ENCODE measurements at regions of chr4 and their contacts with region 1.

Region 1: GRCh38 chr4:147714575-147715401 is 17.1 kb upstream of the ARHGAP10 start:
- DNase-seq: peak; percentile 81
- H3K4me3 ChIP-seq: peak overlapping the region in 1 of 3 experiments; percentile 50
- H3K27ac ChIP-seq: peak overlapping the region; percentile 71
- H3K4me1 ChIP-seq: peaks cover 16% of the 10 kb centered on the region
- H3K27me3 ChIP-seq: no peaks in the 10 kb centered on the region
- CTCF ChIP-seq: no peak
- POLR2A ChIP-seq: no peak

Region 2: DNA sequence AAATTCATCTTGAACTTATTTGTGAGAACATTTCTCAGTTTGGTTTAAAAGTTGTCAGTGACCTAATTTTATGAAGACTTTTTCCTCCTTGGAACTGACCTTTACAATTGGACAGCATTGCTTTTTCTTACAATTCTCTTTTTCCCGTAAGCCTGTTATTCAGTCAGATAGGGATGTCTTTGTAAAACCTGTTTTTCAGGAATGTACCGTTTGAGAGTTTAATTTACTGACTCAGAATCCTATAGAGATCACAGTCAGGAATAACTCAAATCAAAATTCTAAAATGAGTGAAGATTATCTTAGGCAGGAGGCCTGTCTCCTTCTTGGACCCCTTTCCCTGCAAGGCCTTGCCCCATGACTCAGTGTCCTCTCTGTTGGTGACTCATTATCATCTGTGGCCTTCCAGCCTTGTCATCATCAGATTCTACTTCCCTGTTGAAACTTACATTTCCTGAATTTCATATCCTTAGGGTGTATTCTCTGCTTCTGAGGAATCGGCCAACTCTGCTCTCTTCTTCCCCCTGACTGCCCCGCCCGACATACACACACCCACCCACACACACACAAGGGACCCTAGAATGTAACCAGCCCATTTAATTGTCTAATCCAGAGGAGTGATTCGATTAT is 116.9 kb after region 1 on chr4:
- CTCF ChIA-PET with region 1: no interaction called
- POLR2A ChIA-PET with region 1: no interaction called
- dilution Hi-C with region 1: no loop called
- intact Hi-C with region 1: loop called (anchors 1 kb)
- DNase-seq: peak; percentile 88
- H3K4me3 ChIP-seq: peak overlapping the region in 1 of 3 experiments; percentile 37
- H3K27ac ChIP-seq: peak overlapping the region; percentile 99
- H3K4me1 ChIP-seq: peaks cover 30% of the 10 kb centered on the region
- H3K27me3 ChIP-seq: no peaks in the 10 kb centered on the region
- CTCF ChIP-seq: no peak
- POLR2A ChIP-seq: no peak

Region 3: DNA sequence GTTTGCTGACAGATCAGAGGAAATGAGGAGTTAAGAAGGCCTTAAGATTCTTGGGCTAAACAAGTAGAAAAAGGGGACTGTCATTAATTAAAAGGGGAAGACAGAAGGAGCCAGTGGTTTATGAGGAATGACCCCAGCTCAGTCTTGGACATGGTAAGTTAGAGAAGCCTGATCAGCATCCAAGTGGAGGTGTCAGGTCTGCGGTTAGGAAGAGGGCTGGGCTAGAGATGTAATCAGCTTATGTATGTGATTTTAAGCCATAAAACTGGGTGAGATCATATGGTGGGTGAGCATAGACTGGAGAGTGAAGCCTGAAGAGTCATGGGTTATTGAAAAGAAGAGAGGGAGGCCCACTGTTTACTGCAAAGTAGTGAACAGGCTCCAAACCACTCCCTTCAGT is 481.4 kb after region 1 on chr4:
- CTCF ChIA-PET with region 1: no interaction called
- POLR2A ChIA-PET with region 1: no interaction called
- dilution Hi-C with region 1: no loop called
- intact Hi-C with region 1: no loop called
- DNase-seq: no peak
- H3K4me3 ChIP-seq: no peak overlapping the region
- H3K27ac ChIP-seq: no peak overlapping the region
- H3K4me1 ChIP-seq: no peaks in the 10 kb centered on the region
- H3K27me3 ChIP-seq: no peaks in the 10 kb centered on the region
- CTCF ChIP-seq: no peak
- POLR2A ChIP-seq: no peak